ENCODE measurements at regions of chr3 and their contacts with region 1.

Region 1: DNA sequence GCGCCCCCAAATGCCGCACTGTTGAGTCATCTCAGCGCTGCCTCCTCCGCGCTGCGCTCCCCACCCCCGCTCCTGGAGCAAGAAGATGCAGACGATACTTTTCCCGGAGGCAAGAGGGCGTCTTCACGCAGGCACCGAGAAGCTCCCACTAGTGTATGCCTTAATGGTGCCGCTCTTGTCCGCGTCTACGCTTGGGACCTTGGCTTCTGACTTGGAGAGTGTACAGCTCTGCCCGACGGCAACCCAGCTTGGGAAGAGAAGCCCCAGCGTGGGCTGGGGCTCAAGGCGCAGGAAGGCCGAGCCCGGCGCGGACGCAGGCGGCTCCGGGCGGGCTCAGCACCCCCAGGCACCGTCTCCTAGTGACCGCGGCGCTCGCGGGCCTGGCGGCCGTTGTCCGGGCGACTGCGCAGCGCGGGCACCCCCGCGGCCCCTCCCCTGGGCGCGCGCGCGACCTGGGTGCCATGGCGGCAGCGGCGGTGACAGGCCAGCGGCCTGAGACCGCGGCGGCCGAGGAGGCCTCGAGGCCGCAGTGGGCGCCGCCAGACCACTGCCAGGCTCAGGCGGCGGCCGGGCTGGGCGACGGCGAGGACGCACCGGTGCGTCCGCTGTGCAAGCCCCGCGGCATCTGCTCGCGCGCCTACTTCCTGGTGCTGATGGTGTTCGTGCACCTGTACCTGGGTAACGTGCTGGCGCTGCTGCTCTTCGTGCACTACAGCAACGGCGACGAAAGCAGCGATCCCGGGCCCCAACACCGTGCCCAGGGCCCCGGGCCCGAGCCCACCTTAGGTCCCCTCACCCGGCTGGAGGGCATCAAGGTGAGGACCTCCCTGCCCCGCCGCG is at the start of gene P4HTM:
- DNase-seq: peak; percentile 41 to 90 (median 83)
- ATAC-seq: peak; percentile 78
- H3K4me3 ChIP-seq: peak within 1 kb of the TSS; percentile 71 to 76
- H3K4me3 Mint-ChIP-seq: peak within 1 kb of the TSS; percentile 95
- H3K27ac ChIP-seq: peak within 1 kb of the TSS; percentile 68 to 72
- H3K27ac Mint-ChIP-seq: peak within 1 kb of the TSS; percentile 95
- H3K4me1 ChIP-seq: peaks cover 19% of the 10 kb centered on the region
- H3K4me1 Mint-ChIP-seq: peaks cover 45% of the 10 kb centered on the region
- H3K27me3 ChIP-seq: no peaks in the 10 kb centered on the region
- H3K27me3 Mint-ChIP-seq: no peaks in the 10 kb centered on the region
- CTCF ChIP-seq: no peak
- total RNA-seq, gene P4HTM: 41.5 to 41.8 TPM

Region 2: GRCh38 chr3:49007068-49007770 is 17.2 kb after region 1 on chr3 and contains the start of gene WDR6:
- CTCF ChIA-PET with region 1: interaction called, 178 read pairs
- POLR2A ChIA-PET with region 1: interaction called, 25 read pairs
- intact Hi-C with region 1: loop called (anchors 1 kb)
- DNase-seq: peak; percentile 94 to 99 (median 96)
- ATAC-seq: peak; percentile 87
- H3K4me3 ChIP-seq: peak within 1 kb of the TSS; percentile 87 to 92
- H3K4me3 Mint-ChIP-seq: peak within 1 kb of the TSS; percentile 100
- H3K27ac ChIP-seq: peak within 1 kb of the TSS; percentile 81 to 92
- H3K27ac Mint-ChIP-seq: peak within 1 kb of the TSS; percentile 99
- H3K4me1 ChIP-seq: peaks cover 15% of the 10 kb centered on the region
- H3K4me1 Mint-ChIP-seq: peaks cover 30% of the 10 kb centered on the region
- H3K27me3 ChIP-seq: no peaks in the 10 kb centered on the region
- H3K27me3 Mint-ChIP-seq: no peaks in the 10 kb centered on the region
- CTCF ChIP-seq: peak; percentile 34
- total RNA-seq, gene WDR6: 112 to 130 TPM

Region 3: DNA sequence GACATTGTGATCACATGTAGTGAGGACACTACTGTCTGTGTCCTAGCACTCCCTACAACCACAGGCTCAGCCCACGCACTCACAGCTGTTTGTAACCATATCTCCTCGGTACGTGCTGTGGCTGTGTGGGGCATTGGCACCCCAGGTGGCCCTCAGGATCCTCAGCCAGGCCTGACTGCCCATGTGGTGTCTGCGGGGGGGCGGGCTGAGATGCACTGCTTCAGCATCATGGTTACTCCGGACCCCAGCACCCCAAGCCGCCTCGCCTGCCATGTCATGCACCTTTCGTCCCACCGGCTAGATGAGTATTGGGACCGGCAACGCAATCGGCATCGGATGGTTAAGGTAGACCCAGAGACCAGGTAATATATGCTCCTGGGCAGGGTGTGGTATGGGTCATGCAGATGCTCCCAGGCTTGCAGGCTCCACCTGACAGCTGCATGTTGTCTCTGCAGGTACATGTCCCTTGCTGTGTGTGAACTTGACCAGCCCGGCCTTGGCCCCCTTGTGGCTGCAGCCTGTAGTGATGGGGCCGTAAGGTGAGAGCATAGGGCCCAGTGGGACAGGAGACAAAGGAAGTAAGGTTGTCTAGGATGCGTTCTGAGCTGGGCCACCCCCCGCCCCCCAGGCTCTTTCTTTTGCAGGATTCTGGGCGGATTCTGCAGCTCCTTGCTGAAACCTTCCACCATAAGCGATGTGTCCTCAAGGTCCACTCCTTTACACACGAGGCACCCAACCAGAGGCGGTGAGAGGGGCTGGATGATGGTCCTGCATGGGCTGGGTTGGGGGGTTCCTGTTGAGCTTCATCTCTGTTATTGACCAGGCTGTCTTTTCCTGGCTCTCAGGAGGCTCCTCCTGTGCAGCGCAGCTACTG is 24.0 kb after region 1 on chr3:
- CTCF ChIA-PET with region 1: interaction called, 178 read pairs
- POLR2A ChIA-PET with region 1: interaction called, 6 read pairs
- intact Hi-C with region 1: loop called in 1 of 2 experiments (anchors 1 kb)
- DNase-seq: peak in 8 of 9 experiments; percentile 26 to 64 (median 58)
- ATAC-seq: peak; percentile 49
- H3K4me3 ChIP-seq: no peak overlapping the region
- H3K4me3 Mint-ChIP-seq: no peak overlapping the region
- H3K27ac ChIP-seq: no peak overlapping the region
- H3K27ac Mint-ChIP-seq: no peak overlapping the region
- H3K4me1 ChIP-seq: peaks cover 13% of the 10 kb centered on the region
- H3K4me1 Mint-ChIP-seq: peaks cover 18% of the 10 kb centered on the region
- H3K27me3 ChIP-seq: no peaks in the 10 kb centered on the region
- H3K27me3 Mint-ChIP-seq: no peaks in the 10 kb centered on the region
- CTCF ChIP-seq: peak; percentile 26

Region 4: GRCh38 chr3:49028673-49029562 is 38.9 kb after region 1 on chr3 and contains the start of gene IMPDH2:
- CTCF ChIA-PET with region 1: interaction called, 14 read pairs
- POLR2A ChIA-PET with region 1: interaction called, 12 read pairs
- intact Hi-C with region 1: loop called (anchors 1 to 2 kb)
- DNase-seq: peak; percentile 86 to 98 (median 93)
- ATAC-seq: peak; percentile 95
- H3K4me3 ChIP-seq: peak within 1 kb of the TSS; percentile 52 to 81
- H3K4me3 Mint-ChIP-seq: peak within 1 kb of the TSS; percentile 92
- H3K27ac ChIP-seq: peak within 1 kb of the TSS; percentile 77 to 98
- H3K27ac Mint-ChIP-seq: peak within 1 kb of the TSS; percentile 97
- H3K4me1 ChIP-seq: peaks cover 13% of the 10 kb centered on the region
- H3K4me1 Mint-ChIP-seq: peaks cover 25% of the 10 kb centered on the region
- H3K27me3 ChIP-seq: no peaks in the 10 kb centered on the region
- H3K27me3 Mint-ChIP-seq: no peaks in the 10 kb centered on the region
- CTCF ChIP-seq: no peak
- total RNA-seq, gene IMPDH2: 115 to 117 TPM

Region 5: GRCh38 chr3:49158108-49158709 is 168.2 kb after region 1 on chr3:
- CTCF ChIA-PET with region 1: interaction called, 61 read pairs
- POLR2A ChIA-PET with region 1: interaction called, 5 read pairs
- intact Hi-C with region 1: loop called in 1 of 2 experiments (anchors 1 kb)
- DNase-seq: peak; percentile 36 to 77 (median 65)
- ATAC-seq: peak; percentile 98
- H3K4me3 ChIP-seq: no peak overlapping the region
- H3K4me3 Mint-ChIP-seq: no peak overlapping the region
- H3K27ac ChIP-seq: no peak overlapping the region
- H3K27ac Mint-ChIP-seq: peak overlapping the region; percentile 85
- H3K4me1 ChIP-seq: no peaks in the 10 kb centered on the region
- H3K4me1 Mint-ChIP-seq: peaks cover 5% of the 10 kb centered on the region
- H3K27me3 ChIP-seq: no peaks in the 10 kb centered on the region
- H3K27me3 Mint-ChIP-seq: no peaks in the 10 kb centered on the region
- CTCF ChIP-seq: peak; percentile 61

Region 6: GRCh38 chr3:49445381-49445780 is 455.4 kb after region 1 on chr3:
- CTCF ChIA-PET with region 1: interaction called, 3 read pairs
- POLR2A ChIA-PET with region 1: no interaction called
- intact Hi-C with region 1: loop called in 1 of 2 experiments (anchors 5 kb)
- DNase-seq: no peak
- ATAC-seq: no peak
- H3K4me3 ChIP-seq: no peak overlapping the region
- H3K4me3 Mint-ChIP-seq: no peak overlapping the region
- H3K27ac ChIP-seq: no peak overlapping the region
- H3K27ac Mint-ChIP-seq: no peak overlapping the region
- H3K4me1 ChIP-seq: peaks cover 13% of the 10 kb centered on the region
- H3K4me1 Mint-ChIP-seq: peaks cover 11% of the 10 kb centered on the region
- H3K27me3 ChIP-seq: no peaks in the 10 kb centered on the region
- H3K27me3 Mint-ChIP-seq: no peaks in the 10 kb centered on the region
- CTCF ChIP-seq: no peak

Measured in CD8-positive, alpha-beta T cell (primary cell).